Pancreas (tissue), 10 donors: ENCODE measurements at regions of chr12 and their contacts with region 1.

Region 1: GRCh38 chr12:111812881-111813741 is 28.9 kb upstream of the MAPKAPK5 start:
- DNase-seq: peak in 5 of 6 donors; percentile 59 to 79 (median 68)
- ATAC-seq: peak; percentile 90 to 100 (median 98)
- H3K4me3 ChIP-seq: no peak overlapping the region
- H3K27ac ChIP-seq: no peak overlapping the region
- H3K4me1 ChIP-seq: peaks cover 0 to 3% (median 0%) of the 10 kb centered on the region in 3 donors
- H3K27me3 ChIP-seq: no peaks in the 10 kb centered on the region
- CTCF ChIP-seq: peak; percentile 48 to 69 (median 57)

Region 2: DNA sequence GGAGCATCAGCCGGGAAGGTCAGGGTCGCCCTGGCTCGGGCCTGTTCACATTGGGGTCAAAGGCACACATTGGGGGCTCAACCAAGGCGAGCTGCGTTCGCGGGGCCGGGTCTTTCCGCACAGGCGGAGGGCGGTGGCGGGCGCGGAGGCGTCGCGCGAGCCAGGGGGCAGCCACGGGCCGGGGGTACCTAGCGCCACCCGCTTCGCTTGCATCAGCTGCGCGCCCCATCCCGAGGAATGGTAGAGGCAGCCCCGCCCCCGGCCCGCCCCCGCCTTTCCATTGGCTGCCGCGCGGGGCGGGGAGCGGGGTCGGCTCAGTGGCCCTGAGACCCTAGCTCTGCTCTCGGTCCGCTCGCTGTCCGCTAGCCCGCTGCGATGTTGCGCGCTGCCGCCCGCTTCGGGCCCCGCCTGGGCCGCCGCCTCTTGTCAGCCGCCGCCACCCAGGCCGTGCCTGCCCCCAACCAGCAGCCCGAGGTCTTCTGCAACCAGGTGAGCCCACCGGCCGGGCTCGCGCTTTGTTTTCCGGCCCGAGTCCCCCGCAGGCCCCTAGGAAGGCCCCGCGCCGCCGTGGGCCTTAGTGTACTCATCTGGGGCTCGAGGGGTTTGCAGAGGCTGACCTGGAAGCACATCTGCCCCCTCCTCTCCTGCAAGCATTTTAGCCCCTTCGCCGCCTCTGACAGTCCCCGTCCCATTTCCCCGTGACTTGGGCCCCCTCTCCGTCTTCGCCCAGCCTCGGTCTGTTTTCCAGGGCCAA is 46.3 kb before region 1 on chr12 and contains the start of gene ALDH2:
- intact Hi-C with region 1: loop called in 1 of 3 experiments (anchors 10 kb)
- DNase-seq: peak; percentile 68 to 86 (median 78)
- ATAC-seq: peak; percentile 89 to 96 (median 95)
- H3K4me3 ChIP-seq: peak within 1 kb of the TSS; percentile 82 to 95 (median 88)
- H3K27ac ChIP-seq: peak within 1 kb of the TSS; percentile 67 to 80 (median 77)
- H3K4me1 ChIP-seq: peaks cover 0 to 15% (median 0%) of the 10 kb centered on the region in 3 donors
- H3K27me3 ChIP-seq: no peaks in the 10 kb centered on the region
- CTCF ChIP-seq: no peak
- total RNA-seq, gene ALDH2: 33.7 to 80.2 (median 45.3) TPM